ENCODE measurements at regions of chr7 and their contacts with region 1.

Region 1: DNA sequence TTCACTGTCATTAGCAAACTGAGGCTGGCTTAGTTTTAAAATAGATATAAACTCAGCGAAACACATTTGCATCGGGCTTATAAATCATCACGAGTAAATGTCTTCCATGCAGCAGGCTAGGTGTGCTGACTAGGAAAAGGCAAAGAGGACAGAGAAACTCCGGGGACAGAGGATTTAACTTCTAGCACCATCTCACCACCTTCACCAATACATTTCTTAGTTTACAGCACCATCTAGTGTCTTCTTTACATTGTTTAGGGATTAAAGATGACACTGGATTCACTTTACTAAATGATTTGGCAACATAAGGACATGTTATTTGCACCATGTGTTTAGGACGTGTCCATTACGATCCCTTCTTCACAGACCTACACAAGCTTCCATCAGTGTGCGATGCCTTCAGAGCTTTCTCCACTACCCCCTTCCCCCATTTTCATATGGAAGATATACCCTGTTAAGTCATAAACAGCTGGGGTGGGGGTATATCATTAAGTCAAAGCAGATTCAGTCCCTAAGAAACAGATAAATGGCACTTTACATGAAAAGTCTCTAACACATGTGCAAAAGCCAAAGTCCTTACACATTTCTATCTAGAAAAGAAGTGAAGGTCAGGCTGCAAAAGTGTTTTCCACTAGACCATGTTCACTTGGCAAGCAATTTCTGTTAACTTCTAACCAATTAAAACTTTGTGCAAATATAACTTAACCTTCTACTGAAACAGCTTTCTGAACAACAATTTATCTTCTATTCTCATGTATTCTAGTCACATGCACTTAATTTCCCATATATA is 103.3 kb downstream of the GRB10 start:
- DNase-seq: peak in 3 of 14 experiments; percentile 69 to 72 (median 71)
- ATAC-seq: peak; percentile 69
- H3K4me3 ChIP-seq: no peak overlapping the region
- H3K4me3 Mint-ChIP-seq: no peak overlapping the region
- H3K27ac ChIP-seq: no peak overlapping the region
- H3K27ac Mint-ChIP-seq: no peak overlapping the region
- H3K4me1 ChIP-seq: no peaks in the 10 kb centered on the region
- H3K4me1 Mint-ChIP-seq: no peaks in the 10 kb centered on the region
- H3K27me3 ChIP-seq: no peaks in the 10 kb centered on the region
- H3K27me3 Mint-ChIP-seq: no peaks in the 10 kb centered on the region
- CTCF ChIP-seq: peak; percentile 79

Region 2: GRCh38 chr7:50142425-50143017 is 536.9 kb before region 1 on chr7:
- CTCF ChIA-PET with region 1: no interaction called
- POLR2A ChIA-PET with region 1: no interaction called
- intact Hi-C with region 1: loop called (anchors 1 to 5 kb)
- DNase-seq: peak in 7 of 14 experiments; percentile 24 to 83 (median 66)
- ATAC-seq: peak; percentile 75
- H3K4me3 ChIP-seq: no peak overlapping the region
- H3K4me3 Mint-ChIP-seq: peak overlapping the region; percentile 44
- H3K27ac ChIP-seq: no peak overlapping the region
- H3K27ac Mint-ChIP-seq: peak overlapping the region; percentile 35
- H3K4me1 ChIP-seq: peaks cover 15% of the 10 kb centered on the region
- H3K4me1 Mint-ChIP-seq: peaks cover 33% of the 10 kb centered on the region
- H3K27me3 ChIP-seq: no peaks in the 10 kb centered on the region
- H3K27me3 Mint-ChIP-seq: no peaks in the 10 kb centered on the region
- CTCF ChIP-seq: peak; percentile 83

Region 3: GRCh38 chr7:50467817-50468610 is 211.4 kb before region 1 on chr7:
- CTCF ChIA-PET with region 1: interaction called, 4 read pairs
- POLR2A ChIA-PET with region 1: no interaction called
- intact Hi-C with region 1: loop called (anchors 1 kb)
- DNase-seq: peak; percentile 66 to 88 (median 74)
- ATAC-seq: peak; percentile 99
- H3K4me3 ChIP-seq: peak overlapping the region; percentile 29
- H3K4me3 Mint-ChIP-seq: peak overlapping the region; percentile 63
- H3K27ac ChIP-seq: no peak overlapping the region
- H3K27ac Mint-ChIP-seq: no peak overlapping the region
- H3K4me1 ChIP-seq: peaks cover 13% of the 10 kb centered on the region
- H3K4me1 Mint-ChIP-seq: peaks cover 12% of the 10 kb centered on the region
- H3K27me3 ChIP-seq: no peaks in the 10 kb centered on the region
- H3K27me3 Mint-ChIP-seq: no peaks in the 10 kb centered on the region
- CTCF ChIP-seq: peak; percentile 82

Region 4: DNA sequence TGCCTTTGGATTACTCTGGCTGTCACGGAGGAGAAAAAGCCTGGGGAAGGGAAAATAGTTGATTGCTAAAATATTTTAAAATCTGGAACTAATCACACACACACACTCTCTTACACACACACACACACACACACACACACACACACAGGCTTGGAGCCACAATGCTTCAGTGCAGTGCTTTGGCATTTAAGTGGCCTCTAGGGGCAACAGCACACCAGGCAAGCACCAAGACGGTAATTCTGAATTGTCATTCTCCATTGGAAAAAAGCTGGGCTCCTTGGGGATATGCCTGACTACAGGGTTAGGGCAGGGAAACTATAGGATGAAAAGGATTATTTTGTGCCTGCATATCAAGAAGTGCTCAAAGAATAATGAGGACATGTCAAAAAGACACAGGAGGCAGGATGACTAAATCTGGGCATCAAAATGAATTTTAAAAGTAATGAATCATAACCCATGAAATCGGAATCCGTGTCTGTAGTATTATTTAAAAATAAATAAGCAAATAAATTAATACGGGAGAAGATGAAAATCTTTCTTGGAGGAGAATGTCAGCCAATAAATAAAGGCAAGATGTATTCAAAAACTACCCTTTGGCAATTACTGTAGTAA is 83.8 kb before region 1 on chr7:
- CTCF ChIA-PET with region 1: no interaction called
- POLR2A ChIA-PET with region 1: no interaction called
- intact Hi-C with region 1: loop called in 1 of 2 experiments (anchors 5 kb)
- DNase-seq: peak in 6 of 14 experiments; percentile 7 to 52 (median 34)
- ATAC-seq: no peak
- H3K4me3 ChIP-seq: no peak overlapping the region
- H3K4me3 Mint-ChIP-seq: no peak overlapping the region
- H3K27ac ChIP-seq: no peak overlapping the region
- H3K27ac Mint-ChIP-seq: no peak overlapping the region
- H3K4me1 ChIP-seq: peaks cover 8% of the 10 kb centered on the region
- H3K4me1 Mint-ChIP-seq: peaks cover 13% of the 10 kb centered on the region
- H3K27me3 ChIP-seq: no peaks in the 10 kb centered on the region
- H3K27me3 Mint-ChIP-seq: no peaks in the 10 kb centered on the region
- CTCF ChIP-seq: no peak

Region 5: DNA sequence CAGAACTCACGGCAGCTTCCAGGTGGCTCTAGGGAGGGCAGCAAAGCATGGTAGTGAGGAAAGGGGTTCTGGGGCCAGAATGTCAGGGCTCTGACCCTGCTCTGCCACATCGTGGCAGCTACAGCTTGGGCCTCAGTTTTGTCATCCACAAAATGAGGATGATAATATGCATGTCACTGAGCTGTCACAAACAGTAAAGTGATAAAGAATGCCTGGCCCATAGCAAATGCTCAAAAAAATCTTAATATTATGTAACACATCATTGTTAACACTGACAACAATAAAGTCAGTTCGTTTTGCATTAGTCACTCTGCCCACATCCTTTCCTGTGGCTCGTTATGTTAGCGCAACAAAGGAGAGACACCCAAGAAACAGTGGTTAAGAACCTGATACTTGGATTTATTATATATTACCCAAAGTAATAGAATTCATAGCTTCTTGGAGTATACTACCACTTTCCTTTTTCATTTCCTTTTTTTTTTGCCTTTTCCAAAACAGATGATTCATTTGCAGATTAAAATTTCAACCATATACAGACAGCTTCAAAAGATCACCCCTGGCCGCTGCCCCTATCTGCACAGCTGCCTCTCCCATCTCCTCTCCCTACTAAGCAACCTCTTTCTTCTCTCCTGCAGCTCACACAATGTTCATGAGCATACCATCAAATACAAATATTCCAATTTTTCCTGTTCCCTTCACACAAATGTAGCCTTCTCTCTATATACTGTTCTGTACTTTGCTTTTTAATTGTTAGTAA is 68.7 kb before region 1 on chr7:
- CTCF ChIA-PET with region 1: no interaction called
- POLR2A ChIA-PET with region 1: no interaction called
- intact Hi-C with region 1: loop called in 1 of 2 experiments (anchors 5 kb)
- DNase-seq: peak in 10 of 14 experiments; percentile 16 to 90 (median 48)
- ATAC-seq: peak; percentile 87
- H3K4me3 ChIP-seq: no peak overlapping the region
- H3K4me3 Mint-ChIP-seq: no peak overlapping the region
- H3K27ac ChIP-seq: peak overlapping the region in 1 of 2 donors; percentile 28
- H3K27ac Mint-ChIP-seq: peak overlapping the region; percentile 65
- H3K4me1 ChIP-seq: peaks cover 43% of the 10 kb centered on the region
- H3K4me1 Mint-ChIP-seq: peaks cover 34% of the 10 kb centered on the region
- H3K27me3 ChIP-seq: no peaks in the 10 kb centered on the region
- H3K27me3 Mint-ChIP-seq: no peaks in the 10 kb centered on the region
- CTCF ChIP-seq: no peak

Region 6: DNA sequence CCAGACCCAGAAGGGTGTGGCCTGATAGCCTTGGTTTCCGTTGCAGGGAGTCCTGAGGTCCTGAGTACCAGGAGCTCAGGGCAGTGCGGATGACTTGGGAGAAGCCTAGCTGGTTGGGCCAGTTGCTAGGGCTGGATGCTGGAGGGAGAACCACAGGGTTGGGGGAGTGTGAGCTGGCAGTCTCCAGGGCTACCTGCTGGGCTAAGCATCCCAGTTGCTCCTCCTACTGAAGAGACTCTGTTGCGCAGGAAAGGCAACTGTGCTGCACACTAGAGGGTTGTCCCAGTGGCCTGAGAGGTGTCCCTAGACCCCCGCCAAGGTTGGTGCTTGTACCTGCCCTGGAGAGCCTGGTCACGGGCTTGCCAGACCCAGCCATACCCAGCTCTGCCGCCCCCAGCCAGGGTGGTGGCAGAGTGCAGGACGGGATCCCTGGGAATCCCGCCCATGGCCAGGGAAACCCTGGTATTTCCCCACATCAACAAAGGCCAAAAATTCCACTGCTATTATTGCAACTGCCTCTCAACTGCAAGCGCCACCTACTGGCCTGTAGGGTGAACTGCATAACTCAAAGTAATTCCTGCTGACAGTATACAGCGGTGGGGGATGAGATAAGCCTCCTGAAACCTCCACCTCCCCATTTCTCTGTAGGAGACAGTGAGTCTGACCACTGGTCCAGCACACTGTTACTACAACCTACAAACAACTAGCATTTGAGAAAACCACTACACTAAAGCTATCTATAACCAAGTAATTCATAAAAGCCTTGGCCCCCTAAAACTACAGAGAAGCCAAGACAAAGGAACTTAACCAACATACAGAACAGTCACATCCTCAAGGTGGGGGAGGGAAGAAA is 46.6 kb before region 1 on chr7:
- CTCF ChIA-PET with region 1: no interaction called
- POLR2A ChIA-PET with region 1: no interaction called
- intact Hi-C with region 1: loop called in 1 of 2 experiments (anchors 2 kb)
- DNase-seq: peak; percentile 31 to 78 (median 48)
- ATAC-seq: peak; percentile 76
- H3K4me3 ChIP-seq: no peak overlapping the region
- H3K4me3 Mint-ChIP-seq: no peak overlapping the region
- H3K27ac ChIP-seq: no peak overlapping the region
- H3K27ac Mint-ChIP-seq: no peak overlapping the region
- H3K4me1 ChIP-seq: peaks cover 6% of the 10 kb centered on the region
- H3K4me1 Mint-ChIP-seq: no peaks in the 10 kb centered on the region
- H3K27me3 ChIP-seq: peaks cover 0 to 4% of the 10 kb centered on the region in 2 experiments
- H3K27me3 Mint-ChIP-seq: peaks cover 7% of the 10 kb centered on the region
- CTCF ChIP-seq: peak; percentile 96

Region 7: DNA sequence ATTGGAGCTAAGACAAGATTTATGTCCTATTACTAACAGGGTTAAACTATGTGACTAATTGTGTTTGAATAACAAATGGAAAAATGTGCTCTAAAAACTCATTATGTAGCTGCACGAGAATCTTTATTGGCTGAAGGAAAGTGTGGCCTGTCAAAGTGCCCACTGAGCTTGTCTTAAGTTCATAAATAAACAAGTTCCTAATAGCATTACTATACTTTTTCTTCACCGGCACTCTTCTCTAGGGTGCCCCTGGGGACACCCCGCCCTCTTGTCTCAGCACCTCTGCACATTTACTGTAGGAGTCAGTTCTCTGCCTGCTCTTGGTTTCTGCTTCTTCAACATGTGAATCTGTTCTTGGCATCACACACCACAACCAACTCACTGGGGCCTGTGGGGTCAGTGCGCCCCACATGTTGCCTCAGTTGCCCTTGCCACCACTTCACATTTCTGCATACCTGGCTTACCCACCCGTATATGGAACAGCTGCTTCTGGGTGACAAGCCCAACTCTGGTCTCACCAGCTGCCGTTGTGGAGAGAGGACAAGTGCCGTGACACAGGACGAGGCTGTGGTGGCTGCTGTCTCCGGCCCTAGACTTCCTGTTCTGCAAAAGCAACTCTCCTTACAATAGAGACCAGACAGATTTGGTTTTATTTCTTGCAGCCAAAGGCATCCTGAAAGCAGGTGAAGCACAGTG is 17.9 kb before region 1 on chr7:
- CTCF ChIA-PET with region 1: interaction called, 3 read pairs
- POLR2A ChIA-PET with region 1: no interaction called
- intact Hi-C with region 1: loop called in 1 of 2 experiments (anchors 2 kb)
- DNase-seq: peak in 6 of 14 experiments; percentile 12 to 49 (median 28)
- ATAC-seq: no peak
- H3K4me3 ChIP-seq: peak overlapping the region; percentile 12
- H3K4me3 Mint-ChIP-seq: peak overlapping the region; percentile 22
- H3K27ac ChIP-seq: peak overlapping the region in 1 of 2 donors; percentile 0
- H3K27ac Mint-ChIP-seq: peak overlapping the region; percentile 81
- H3K4me1 ChIP-seq: peaks cover 54% of the 10 kb centered on the region
- H3K4me1 Mint-ChIP-seq: peaks cover 51% of the 10 kb centered on the region
- H3K27me3 ChIP-seq: no peaks in the 10 kb centered on the region
- H3K27me3 Mint-ChIP-seq: no peaks in the 10 kb centered on the region
- CTCF ChIP-seq: no peak

Region 8: DNA sequence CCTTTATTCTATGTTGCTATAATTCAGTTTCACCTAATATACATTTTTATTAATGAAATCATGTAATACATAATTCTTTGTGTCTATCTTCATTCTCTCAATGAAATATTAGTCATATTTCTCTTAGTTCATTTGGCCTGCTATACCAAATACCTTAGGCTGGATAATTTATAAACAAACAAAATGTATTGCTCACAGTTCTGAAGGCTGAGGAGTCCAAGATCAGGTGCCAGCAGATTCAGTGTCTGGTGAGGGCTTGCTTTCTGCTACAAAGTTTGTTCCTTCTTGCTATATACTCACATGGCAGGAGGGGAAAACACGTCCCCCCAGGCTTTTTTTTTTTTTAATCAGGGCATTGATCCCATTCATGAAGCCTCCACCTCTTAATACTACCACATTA is 246.6 kb after region 1 on chr7:
- CTCF ChIA-PET with region 1: no interaction called
- POLR2A ChIA-PET with region 1: no interaction called
- intact Hi-C with region 1: no loop called
- DNase-seq: no peak
- ATAC-seq: no peak
- H3K4me3 ChIP-seq: no peak overlapping the region
- H3K4me3 Mint-ChIP-seq: no peak overlapping the region
- H3K27ac ChIP-seq: no peak overlapping the region
- H3K27ac Mint-ChIP-seq: no peak overlapping the region
- H3K4me1 ChIP-seq: no peaks in the 10 kb centered on the region
- H3K4me1 Mint-ChIP-seq: peaks cover 6% of the 10 kb centered on the region
- H3K27me3 ChIP-seq: no peaks in the 10 kb centered on the region
- H3K27me3 Mint-ChIP-seq: no peaks in the 10 kb centered on the region
- CTCF ChIP-seq: no peak